ENCODE measurements at regions of chr14 and their contacts with region 1.

Region 1: GRCh38 chr14:75176142-75176820 is at the start of gene TMED10:
- DNase-seq: peak; percentile 86 to 96 (median 94)
- ATAC-seq: peak; percentile 84
- H3K4me3 ChIP-seq: peak within 1 kb of the TSS; percentile 93
- H3K4me3 Mint-ChIP-seq: peak within 1 kb of the TSS; percentile 77 to 96 (median 91)
- H3K27ac ChIP-seq: peak within 1 kb of the TSS; percentile 98
- H3K27ac Mint-ChIP-seq: peak within 1 kb of the TSS; percentile 95 to 99 (median 97)
- H3K4me1 ChIP-seq: peaks cover 27 to 33% of the 10 kb centered on the region in 2 donors
- H3K4me1 Mint-ChIP-seq: peaks cover 27 to 60% (median 53%) of the 10 kb centered on the region in 7 donors
- H3K27me3 ChIP-seq: no peaks in the 10 kb centered on the region
- H3K27me3 Mint-ChIP-seq: peaks cover 0 to 7% (median 0%) of the 10 kb centered on the region in 5 donors
- total RNA-seq, gene TMED10: 155 to 233 (median 171) TPM

Region 2: GRCh38 chr14:74762917-74763802 is 413.1 kb before region 1 on chr14 and contains the start of gene YLPM1:
- CTCF ChIA-PET with region 1: no interaction called
- POLR2A ChIA-PET with region 1: interaction called, 4 read pairs
- intact Hi-C with region 1: loop called (anchors 1 kb)
- DNase-seq: peak; percentile 79 to 97 (median 95)
- ATAC-seq: peak; percentile 98
- H3K4me3 ChIP-seq: peak within 1 kb of the TSS; percentile 58
- H3K4me3 Mint-ChIP-seq: peak within 1 kb of the TSS; percentile 86 to 99 (median 95)
- H3K27ac ChIP-seq: peak within 1 kb of the TSS; percentile 93
- H3K27ac Mint-ChIP-seq: peak within 1 kb of the TSS; percentile 87 to 97 (median 95)
- H3K4me1 ChIP-seq: peaks cover 31 to 38% of the 10 kb centered on the region in 2 donors
- H3K4me1 Mint-ChIP-seq: peaks cover 43 to 56% (median 49%) of the 10 kb centered on the region in 7 donors
- H3K27me3 ChIP-seq: no peaks in the 10 kb centered on the region
- H3K27me3 Mint-ChIP-seq: peaks cover 0 to 2% (median 0%) of the 10 kb centered on the region in 5 donors
- total RNA-seq, gene YLPM1: 84.7 to 119 (median 109) TPM

Region 3: GRCh38 chr14:75141967-75142366 is 34.3 kb before region 1 on chr14:
- CTCF ChIA-PET with region 1: no interaction called
- POLR2A ChIA-PET with region 1: interaction called, 6 read pairs
- intact Hi-C with region 1: loop called in 1 of 2 experiments (anchors 1 kb)
- DNase-seq: peak in 7 of 9 donors; percentile 26 to 59 (median 47)
- ATAC-seq: peak; percentile 55
- H3K4me3 ChIP-seq: no peak overlapping the region
- H3K4me3 Mint-ChIP-seq: peak overlapping the region in 1 of 10 donors; percentile 47
- H3K27ac ChIP-seq: no peak overlapping the region
- H3K27ac Mint-ChIP-seq: peak overlapping the region in 8 of 9 donors; percentile 30 to 81 (median 56)
- H3K4me1 ChIP-seq: peaks cover 20 to 50% of the 10 kb centered on the region in 2 donors
- H3K4me1 Mint-ChIP-seq: peaks cover 52 to 86% (median 74%) of the 10 kb centered on the region in 7 donors
- H3K27me3 ChIP-seq: no peaks in the 10 kb centered on the region
- H3K27me3 Mint-ChIP-seq: no peaks in the 10 kb centered on the region

Region 4: DNA sequence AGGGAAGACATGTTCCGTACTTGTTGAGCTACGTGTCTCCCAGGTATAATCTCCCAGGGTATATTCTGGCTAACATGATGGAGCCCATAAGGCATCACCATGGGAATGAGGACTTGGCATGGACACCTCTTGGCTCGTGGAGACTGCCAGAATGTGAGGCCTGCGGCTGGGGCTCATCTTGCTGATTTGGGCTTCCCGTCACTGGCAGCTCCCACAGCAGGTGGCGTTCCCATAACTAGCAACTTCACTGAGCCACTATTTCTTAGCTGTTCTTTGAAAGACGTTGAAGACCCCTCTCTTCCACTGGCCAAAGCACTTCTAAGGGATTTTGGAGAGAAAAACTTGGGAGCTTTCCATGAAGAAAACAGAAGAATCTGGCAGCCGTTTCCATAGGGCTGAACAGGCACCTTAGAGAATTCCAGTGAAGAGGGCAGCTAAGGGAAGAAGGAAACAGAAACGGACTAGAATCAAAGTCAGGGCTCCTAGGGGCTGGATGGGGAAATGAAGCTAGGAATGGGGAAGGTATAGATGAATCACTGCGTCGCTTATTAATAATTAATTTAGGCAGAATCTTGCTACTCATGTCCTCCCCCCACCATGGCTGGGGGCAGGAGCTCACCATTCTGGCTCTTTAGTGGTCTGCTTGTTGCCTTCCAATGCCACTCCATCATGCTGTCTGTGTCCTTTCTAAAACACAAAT is 62.6 kb after region 1 on chr14:
- CTCF ChIA-PET with region 1: no interaction called
- POLR2A ChIA-PET with region 1: interaction called, 10 read pairs
- intact Hi-C with region 1: no loop called
- DNase-seq: no peak
- ATAC-seq: no peak
- H3K4me3 ChIP-seq: no peak overlapping the region
- H3K4me3 Mint-ChIP-seq: no peak overlapping the region
- H3K27ac ChIP-seq: no peak overlapping the region
- H3K27ac Mint-ChIP-seq: peak overlapping the region in 2 of 9 donors; percentile 14 to 30
- H3K4me1 ChIP-seq: no peaks in the 10 kb centered on the region
- H3K4me1 Mint-ChIP-seq: peaks cover 0 to 25% (median 17%) of the 10 kb centered on the region in 7 donors
- H3K27me3 ChIP-seq: no peaks in the 10 kb centered on the region
- H3K27me3 Mint-ChIP-seq: peaks cover 0 to 49% (median 0%) of the 10 kb centered on the region in 5 donors

Region 5: DNA sequence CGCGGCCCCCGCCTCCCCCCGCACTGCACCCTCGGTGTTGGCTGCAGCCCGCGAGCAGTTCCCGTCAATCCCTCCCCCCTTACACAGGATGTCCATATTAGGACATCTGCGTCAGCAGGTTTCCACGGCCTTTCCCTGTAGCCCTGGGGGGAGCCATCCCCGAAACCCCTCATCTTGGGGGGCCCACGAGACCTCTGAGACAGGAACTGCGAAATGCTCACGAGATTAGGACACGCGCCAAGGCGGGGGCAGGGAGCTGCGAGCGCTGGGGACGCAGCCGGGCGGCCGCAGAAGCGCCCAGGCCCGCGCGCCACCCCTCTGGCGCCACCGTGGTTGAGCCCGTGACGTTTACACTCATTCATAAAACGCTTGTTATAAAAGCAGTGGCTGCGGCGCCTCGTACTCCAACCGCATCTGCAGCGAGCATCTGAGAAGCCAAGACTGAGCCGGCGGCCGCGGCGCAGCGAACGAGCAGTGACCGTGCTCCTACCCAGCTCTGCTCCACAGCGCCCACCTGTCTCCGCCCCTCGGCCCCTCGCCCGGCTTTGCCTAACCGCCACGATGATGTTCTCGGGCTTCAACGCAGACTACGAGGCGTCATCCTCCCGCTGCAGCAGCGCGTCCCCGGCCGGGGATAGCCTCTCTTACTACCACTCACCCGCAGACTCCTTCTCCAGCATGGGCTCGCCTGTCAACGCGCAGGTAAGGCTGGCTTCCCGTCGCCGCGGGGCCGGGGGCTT is 102.3 kb after region 1 on chr14 and contains the start of gene FOS:
- CTCF ChIA-PET with region 1: no interaction called
- POLR2A ChIA-PET with region 1: interaction called, 3 read pairs
- intact Hi-C with region 1: loop called (anchors 1 kb)
- DNase-seq: peak; percentile 87 to 99 (median 98)
- ATAC-seq: peak; percentile 74
- H3K4me3 ChIP-seq: peak within 1 kb of the TSS; percentile 86
- H3K4me3 Mint-ChIP-seq: peak within 1 kb of the TSS; percentile 92 to 97 (median 94)
- H3K27ac ChIP-seq: peak within 1 kb of the TSS; percentile 91
- H3K27ac Mint-ChIP-seq: peak within 1 kb of the TSS; percentile 87 to 100 (median 99)
- H3K4me1 ChIP-seq: peaks cover 32 to 34% of the 10 kb centered on the region in 2 donors
- H3K4me1 Mint-ChIP-seq: peaks cover 21 to 64% (median 50%) of the 10 kb centered on the region in 7 donors
- H3K27me3 ChIP-seq: peaks cover 4 to 5% of the 10 kb centered on the region in 2 donors
- H3K27me3 Mint-ChIP-seq: peaks cover 0 to 81% (median 3%) of the 10 kb centered on the region in 5 donors
- total RNA-seq, gene FOS: 9.4 to 4,557 (median 14.4) TPM

Region 6: GRCh38 chr14:76151398-76152339 is 975.4 kb after region 1 on chr14 and contains the start of gene GPATCH2L:
- CTCF ChIA-PET with region 1: no interaction called
- POLR2A ChIA-PET with region 1: no interaction called
- intact Hi-C with region 1: loop called in 1 of 2 experiments (anchors 5 kb)
- DNase-seq: peak; percentile 90 to 98 (median 95)
- ATAC-seq: peak; percentile 96
- H3K4me3 ChIP-seq: peak within 1 kb of the TSS; percentile 91
- H3K4me3 Mint-ChIP-seq: peak within 1 kb of the TSS; percentile 89 to 98 (median 95)
- H3K27ac ChIP-seq: peak within 1 kb of the TSS; percentile 95
- H3K27ac Mint-ChIP-seq: peak within 1 kb of the TSS; percentile 86 to 98 (median 96)
- H3K4me1 ChIP-seq: peaks cover 40 to 44% of the 10 kb centered on the region in 2 donors
- H3K4me1 Mint-ChIP-seq: peaks cover 40 to 56% (median 53%) of the 10 kb centered on the region in 7 donors
- H3K27me3 ChIP-seq: no peaks in the 10 kb centered on the region
- H3K27me3 Mint-ChIP-seq: peaks cover 0 to 18% (median 0%) of the 10 kb centered on the region in 5 donors
- total RNA-seq, gene GPATCH2L: 60.4 to 83.1 (median 66.6) TPM

Measured in naive thymus-derived CD4-positive, alpha-beta T cell (primary cell).